Activated CD4-positive, alpha-beta T cell treated with anti-CD3 and anti-CD28 coated beads, Interleukin-2, amount 10 ng/mL, durations not matched to agents 24 days and 14 days (primary cell): ENCODE measurements at regions of chr16 and their contacts with region 1.

Region 1: GRCh38 chr16:5033256-5034169 is at the start of gene NAGPA:
- DNase-seq: peak; percentile 95
- H3K4me3 Mint-ChIP-seq: peak within 1 kb of the TSS; percentile 89
- H3K27ac Mint-ChIP-seq: peak within 1 kb of the TSS; percentile 84
- H3K4me1 Mint-ChIP-seq: peaks cover 10% of the 10 kb centered on the region
- H3K27me3 Mint-ChIP-seq: no peaks in the 10 kb centered on the region
- total RNA-seq, gene NAGPA: 10.6 and 11.4 TPM in 2 replicates

Region 2: GRCh38 chr16:4232541-4233386 is 800.7 kb before region 1 on chr16:
- intact Hi-C with region 1: no loop called
- DNase-seq: no peak
- H3K4me3 Mint-ChIP-seq: no peak overlapping the region
- H3K27ac Mint-ChIP-seq: no peak overlapping the region
- H3K4me1 Mint-ChIP-seq: no peaks in the 10 kb centered on the region
- H3K27me3 Mint-ChIP-seq: peaks cover 10% of the 10 kb centered on the region

Region 3: DNA sequence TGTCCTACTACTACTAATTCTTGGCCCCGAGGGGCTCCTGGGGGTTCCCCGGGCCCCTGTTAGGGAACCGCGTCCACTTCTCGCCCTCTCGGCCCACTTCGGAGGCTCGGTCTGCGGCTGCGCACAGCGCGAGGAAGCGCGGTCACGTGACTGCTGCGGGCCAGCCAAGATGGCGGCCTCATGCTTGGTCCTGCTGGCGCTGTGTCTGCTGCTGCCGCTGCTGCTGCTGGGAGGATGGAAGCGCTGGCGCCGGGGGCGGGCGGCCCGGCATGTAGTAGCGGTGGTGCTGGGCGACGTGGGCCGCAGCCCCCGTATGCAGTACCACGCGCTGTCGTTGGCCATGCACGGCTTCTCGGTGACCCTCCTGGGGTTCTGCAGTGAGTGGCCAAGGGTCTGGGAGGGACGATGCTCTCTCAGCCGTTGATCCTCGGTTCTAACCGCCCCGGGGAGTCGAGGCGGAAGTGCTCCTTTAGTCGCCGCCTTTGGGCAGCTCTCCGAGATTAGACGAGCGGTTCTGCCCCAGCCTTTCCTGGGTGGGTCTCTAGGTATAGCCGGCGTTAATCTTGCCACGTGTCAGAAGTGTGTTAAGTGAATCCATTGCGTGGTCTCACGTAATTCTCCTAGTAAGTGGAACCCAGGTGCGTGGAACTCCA is 38.3 kb after region 1 on chr16 and contains the start of gene ALG1:
- intact Hi-C with region 1: loop called (anchors 5 kb)
- DNase-seq: peak; percentile 97
- H3K4me3 Mint-ChIP-seq: peak within 1 kb of the TSS; percentile 100
- H3K27ac Mint-ChIP-seq: peak within 1 kb of the TSS; percentile 99
- H3K4me1 Mint-ChIP-seq: peaks cover 23% of the 10 kb centered on the region
- H3K27me3 Mint-ChIP-seq: no peaks in the 10 kb centered on the region
- total RNA-seq, gene ALG1: 36.1 and 37.1 TPM in 2 replicates